ENCODE measurements at regions of chr11 and their contacts with region 1.

Region 1: DNA sequence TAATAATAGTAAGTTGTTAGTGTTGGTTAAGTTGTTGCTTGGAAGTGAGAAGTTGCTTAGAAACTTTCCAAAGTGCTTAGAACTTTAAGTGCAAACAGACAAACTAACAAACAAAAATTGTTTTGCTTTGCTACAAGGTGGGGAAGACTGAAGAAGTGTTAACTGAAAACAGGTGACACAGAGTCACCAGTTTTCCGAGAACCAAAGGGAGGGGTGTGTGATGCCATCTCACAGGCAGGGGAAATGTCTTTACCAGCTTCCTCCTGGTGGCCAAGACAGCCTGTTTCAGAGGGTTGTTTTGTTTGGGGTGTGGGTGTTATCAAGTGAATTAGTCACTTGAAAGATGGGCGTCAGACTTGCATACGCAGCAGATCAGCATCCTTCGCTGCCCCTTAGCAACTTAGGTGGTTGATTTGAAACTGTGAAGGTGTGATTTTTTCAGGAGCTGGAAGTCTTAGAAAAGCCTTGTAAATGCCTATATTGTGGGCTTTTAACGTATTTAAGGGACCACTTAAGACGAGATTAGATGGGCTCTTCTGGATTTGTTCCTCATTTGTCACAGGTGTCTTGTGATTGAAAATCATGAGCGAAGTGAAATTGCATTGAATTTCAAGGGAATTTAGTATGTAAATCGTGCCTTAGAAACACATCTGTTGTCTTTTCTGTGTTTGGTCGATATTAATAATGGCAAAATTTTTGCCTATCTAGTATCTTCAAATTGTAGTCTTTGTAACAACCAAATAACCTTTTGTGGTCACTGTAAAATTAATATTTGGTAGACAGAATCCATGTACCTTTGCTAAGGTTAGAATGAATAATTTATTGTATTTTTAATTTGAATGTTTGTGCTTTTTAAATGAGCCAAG is 2.7 kb downstream of the NEAT1 start:
- DNase-seq: peak; percentile 90
- ATAC-seq: peak; percentile 32
- H3K4me3 Mint-ChIP-seq: peak overlapping the region; percentile 89
- H3K27ac Mint-ChIP-seq: peak overlapping the region; percentile 98
- H3K4me1 Mint-ChIP-seq: peaks cover 41% of the 10 kb centered on the region
- H3K27me3 Mint-ChIP-seq: peaks cover 8% of the 10 kb centered on the region
- CTCF ChIP-seq: no peak

Region 2: DNA sequence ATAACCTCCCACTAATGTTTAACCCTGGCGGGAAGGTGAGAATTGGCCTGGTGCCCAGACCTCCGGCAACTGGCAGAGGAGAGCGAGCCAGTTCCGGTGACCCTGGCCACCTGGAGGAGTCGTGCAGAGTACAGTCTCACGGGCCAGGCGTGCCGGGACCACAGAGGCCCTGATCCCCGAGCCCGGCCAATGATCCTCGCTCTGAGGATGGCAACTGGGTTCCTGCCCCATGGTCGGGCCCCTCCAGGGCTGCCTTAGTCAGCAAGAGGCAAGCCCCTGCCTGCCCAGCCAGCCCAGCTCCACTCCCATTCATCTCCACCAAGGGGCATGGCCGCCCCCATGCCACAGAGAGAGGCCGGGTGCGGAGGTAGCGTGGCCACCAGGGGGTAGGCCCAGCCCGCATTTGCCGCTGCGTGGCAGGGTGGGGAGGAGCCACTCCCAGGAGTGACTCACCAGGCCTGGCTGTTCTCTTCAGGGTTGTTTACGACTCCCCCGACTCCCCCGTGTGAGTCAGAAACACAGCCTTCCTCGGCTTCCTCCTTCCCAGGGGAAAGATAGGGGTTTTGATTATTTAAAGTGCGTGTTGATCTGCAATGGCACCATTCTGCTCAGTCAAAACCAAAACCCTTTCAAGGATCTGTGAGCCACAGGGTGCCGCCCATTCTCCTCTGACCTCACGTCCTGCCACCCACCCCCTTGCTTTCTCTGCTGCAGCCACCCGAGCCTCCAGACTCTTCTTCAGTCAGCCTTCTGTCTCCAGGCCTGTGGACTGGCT is 43.1 kb before region 1 on chr11 and contains the start of gene SLC25A45:
- CTCF ChIA-PET with region 1: interaction called, 3 read pairs
- POLR2A ChIA-PET with region 1: interaction called, 339 read pairs
- intact Hi-C with region 1: loop called (anchors 5 kb)
- DNase-seq: peak; percentile 96
- ATAC-seq: peak; percentile 85
- H3K4me3 Mint-ChIP-seq: peak within 1 kb of the TSS; percentile 78
- H3K27ac Mint-ChIP-seq: peak within 1 kb of the TSS; percentile 97
- H3K4me1 Mint-ChIP-seq: peaks cover 44% of the 10 kb centered on the region
- H3K27me3 Mint-ChIP-seq: no peaks in the 10 kb centered on the region
- CTCF ChIP-seq: peak; percentile 91
- total RNA-seq, gene SLC25A45: 12.8 to 14.4 TPM

Region 3: GRCh38 chr11:65448418-65449105 is 23.2 kb after region 1 on chr11:
- CTCF ChIA-PET with region 1: no interaction called
- POLR2A ChIA-PET with region 1: interaction called, 10 read pairs
- intact Hi-C with region 1: no loop called
- DNase-seq: peak; percentile 48
- ATAC-seq: peak; percentile 29
- H3K4me3 Mint-ChIP-seq: no peak overlapping the region
- H3K27ac Mint-ChIP-seq: peak overlapping the region; percentile 37
- H3K4me1 Mint-ChIP-seq: peaks cover 17% of the 10 kb centered on the region
- H3K27me3 Mint-ChIP-seq: no peaks in the 10 kb centered on the region
- CTCF ChIP-seq: no peak